Naive thymus-derived CD4-positive, alpha-beta T cell (primary cell): ENCODE measurements at regions of chr2 and their contacts with region 1.

Region 1: GRCh38 chr2:136135921-136136906 is 18.3 kb upstream of the CXCR4 start:
- DNase-seq: peak; percentile 32 to 98 (median 95)
- ATAC-seq: peak; percentile 76
- H3K4me3 ChIP-seq: peak overlapping the region; percentile 15
- H3K4me3 Mint-ChIP-seq: peak overlapping the region; percentile 52 to 92 (median 81)
- H3K27ac ChIP-seq: peak overlapping the region; percentile 99
- H3K27ac Mint-ChIP-seq: peak overlapping the region; percentile 82 to 100 (median 99)
- H3K4me1 ChIP-seq: peaks cover 86 to 87% of the 10 kb centered on the region in 2 donors
- H3K4me1 Mint-ChIP-seq: peaks cover 70 to 100% (median 94%) of the 10 kb centered on the region in 7 donors
- H3K27me3 ChIP-seq: no peaks in the 10 kb centered on the region
- H3K27me3 Mint-ChIP-seq: peaks cover 0 to 50% (median 0%) of the 10 kb centered on the region in 5 donors

Region 2: DNA sequence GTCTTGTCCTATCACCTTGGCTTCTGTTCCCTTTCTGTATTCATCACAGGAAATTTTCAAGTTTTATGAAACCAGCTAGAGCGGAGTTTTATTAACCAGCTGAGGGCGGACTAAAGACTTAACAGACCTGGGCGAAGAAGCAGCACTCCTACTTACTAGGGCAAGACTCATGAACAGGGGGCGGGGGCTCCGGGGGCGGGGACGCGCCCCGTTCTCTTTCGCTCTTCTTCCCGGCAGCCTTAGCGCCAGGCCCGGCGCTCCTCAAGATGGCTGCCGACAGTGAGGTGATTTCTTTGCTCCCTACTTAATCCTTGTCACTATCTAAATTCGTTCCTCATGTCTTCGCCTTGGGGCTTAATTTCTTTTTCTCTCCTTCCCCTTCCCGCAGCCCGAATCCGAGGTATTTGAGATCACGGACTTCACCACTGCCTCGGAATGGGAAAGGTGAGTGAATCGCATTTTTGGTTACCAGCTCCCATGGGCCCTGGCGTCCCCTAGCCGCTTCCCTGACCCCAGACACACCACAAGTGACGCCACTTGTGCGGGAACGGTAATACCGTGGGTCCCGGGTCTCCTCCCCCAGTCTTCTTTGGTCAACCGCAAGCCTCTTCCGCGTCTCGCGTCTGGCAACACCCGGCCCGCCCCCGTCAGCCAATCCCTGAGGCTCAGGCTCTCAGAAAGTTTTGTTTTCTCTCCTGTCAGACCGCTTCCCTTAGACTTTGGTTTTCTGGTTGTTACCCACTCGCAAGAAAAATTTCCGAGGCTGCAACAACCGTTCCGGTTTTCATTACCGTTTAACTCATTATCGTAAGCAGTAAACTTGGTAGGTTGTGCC is 1084.0 kb before region 1 on chr2 and contains the start of gene RAB3GAP1:
- CTCF ChIA-PET with region 1: interaction called, 3 read pairs
- POLR2A ChIA-PET with region 1: no interaction called
- intact Hi-C with region 1: loop called in 1 of 2 experiments (anchors 1 kb)
- DNase-seq: peak; percentile 76 to 96 (median 94)
- ATAC-seq: peak; percentile 93
- H3K4me3 ChIP-seq: peak within 1 kb of the TSS; percentile 69
- H3K4me3 Mint-ChIP-seq: peak within 1 kb of the TSS; percentile 94 to 99 (median 97)
- H3K27ac ChIP-seq: peak within 1 kb of the TSS; percentile 99
- H3K27ac Mint-ChIP-seq: peak within 1 kb of the TSS; percentile 98 to 100 (median 99)
- H3K4me1 ChIP-seq: peaks cover 0 to 22% of the 10 kb centered on the region in 2 donors
- H3K4me1 Mint-ChIP-seq: peaks cover 24 to 52% (median 48%) of the 10 kb centered on the region in 7 donors
- H3K27me3 ChIP-seq: no peaks in the 10 kb centered on the region
- H3K27me3 Mint-ChIP-seq: peaks cover 0 to 6% (median 0%) of the 10 kb centered on the region in 5 donors
- total RNA-seq, gene RAB3GAP1: 24.3 to 58.7 (median 42.9) TPM

Region 3: GRCh38 chr2:135825550-135826176 is 310.6 kb before region 1 on chr2:
- CTCF ChIA-PET with region 1: no interaction called
- POLR2A ChIA-PET with region 1: no interaction called
- intact Hi-C with region 1: no loop called
- DNase-seq: no peak
- ATAC-seq: no peak
- H3K4me3 ChIP-seq: no peak overlapping the region
- H3K4me3 Mint-ChIP-seq: no peak overlapping the region
- H3K27ac ChIP-seq: no peak overlapping the region
- H3K27ac Mint-ChIP-seq: peak overlapping the region in 1 of 9 donors; percentile 1
- H3K4me1 ChIP-seq: no peaks in the 10 kb centered on the region
- H3K4me1 Mint-ChIP-seq: peaks cover 0 to 28% (median 9%) of the 10 kb centered on the region in 7 donors
- H3K27me3 ChIP-seq: no peaks in the 10 kb centered on the region
- H3K27me3 Mint-ChIP-seq: no peaks in the 10 kb centered on the region

Region 4: DNA sequence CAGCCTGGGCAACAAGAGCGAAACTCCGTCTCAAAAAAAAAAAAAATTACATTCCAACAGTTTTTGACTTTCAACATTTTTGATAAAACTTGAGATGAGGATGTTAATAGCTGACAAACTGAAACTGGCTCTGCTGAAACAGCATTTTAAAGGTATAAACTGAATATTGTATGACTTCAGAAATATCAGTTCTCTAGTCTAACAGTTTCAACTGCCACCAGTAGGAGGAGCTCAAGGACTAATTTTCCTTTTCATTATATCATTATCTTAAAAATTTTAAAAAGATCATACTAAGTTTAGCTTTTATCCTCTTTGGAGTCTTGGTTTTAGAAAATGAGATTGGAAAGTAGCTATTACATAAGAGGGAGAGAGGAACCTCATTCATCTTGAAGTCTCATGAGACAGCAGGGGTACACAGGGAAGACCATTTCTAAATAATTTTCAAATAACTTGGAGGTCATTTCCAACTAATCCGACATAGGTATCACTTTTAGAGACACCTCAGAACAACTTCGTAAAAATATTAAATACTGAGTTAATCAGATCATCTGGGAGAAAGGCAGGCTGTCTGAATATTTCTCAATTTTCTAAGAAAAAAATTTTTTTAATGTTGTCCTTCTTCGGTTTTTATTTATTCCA is 222.4 kb before region 1 on chr2:
- CTCF ChIA-PET with region 1: interaction called, 3 read pairs
- POLR2A ChIA-PET with region 1: interaction called, 5 read pairs
- intact Hi-C with region 1: loop called in 1 of 2 experiments (anchors 5 kb)
- DNase-seq: peak in 7 of 9 donors; percentile 36 to 67 (median 60)
- ATAC-seq: peak; percentile 63
- H3K4me3 ChIP-seq: no peak overlapping the region
- H3K4me3 Mint-ChIP-seq: no peak overlapping the region
- H3K27ac ChIP-seq: no peak overlapping the region
- H3K27ac Mint-ChIP-seq: peak overlapping the region in 6 of 9 donors; percentile 34 to 82 (median 55)
- H3K4me1 ChIP-seq: no peaks in the 10 kb centered on the region
- H3K4me1 Mint-ChIP-seq: peaks cover 0 to 12% (median 3%) of the 10 kb centered on the region in 7 donors
- H3K27me3 ChIP-seq: no peaks in the 10 kb centered on the region
- H3K27me3 Mint-ChIP-seq: no peaks in the 10 kb centered on the region

Region 5: GRCh38 chr2:136112317-136113208 is 23.7 kb before region 1 on chr2:
- CTCF ChIA-PET with region 1: interaction called, 6 read pairs
- POLR2A ChIA-PET with region 1: interaction called, 86 read pairs
- intact Hi-C with region 1: no loop called
- DNase-seq: peak in 2 of 9 donors; percentile 19 to 39
- ATAC-seq: no peak
- H3K4me3 ChIP-seq: no peak overlapping the region
- H3K4me3 Mint-ChIP-seq: peak overlapping the region in 8 of 10 donors; percentile 10 to 100 (median 68)
- H3K27ac ChIP-seq: no peak overlapping the region
- H3K27ac Mint-ChIP-seq: peak overlapping the region in 8 of 9 donors; percentile 39 to 100 (median 69)
- H3K4me1 ChIP-seq: peaks cover 20 to 30% of the 10 kb centered on the region in 2 donors
- H3K4me1 Mint-ChIP-seq: peaks cover 21 to 53% (median 42%) of the 10 kb centered on the region in 7 donors
- H3K27me3 ChIP-seq: no peaks in the 10 kb centered on the region
- H3K27me3 Mint-ChIP-seq: peaks cover 0 to 4% (median 0%) of the 10 kb centered on the region in 5 donors

Region 6: GRCh38 chr2:136191041-136191440 is 54.8 kb after region 1 on chr2:
- CTCF ChIA-PET with region 1: interaction called, 3 read pairs
- POLR2A ChIA-PET with region 1: interaction called, 4 read pairs
- intact Hi-C with region 1: loop called in 1 of 2 experiments (anchors 2 kb)
- DNase-seq: no peak
- ATAC-seq: no peak
- H3K4me3 ChIP-seq: no peak overlapping the region
- H3K4me3 Mint-ChIP-seq: no peak overlapping the region
- H3K27ac ChIP-seq: no peak overlapping the region
- H3K27ac Mint-ChIP-seq: peak overlapping the region in 1 of 9 donors; percentile 30
- H3K4me1 ChIP-seq: no peaks in the 10 kb centered on the region
- H3K4me1 Mint-ChIP-seq: peaks cover 0 to 8% (median 0%) of the 10 kb centered on the region in 7 donors
- H3K27me3 ChIP-seq: no peaks in the 10 kb centered on the region
- H3K27me3 Mint-ChIP-seq: no peaks in the 10 kb centered on the region

Region 7: DNA sequence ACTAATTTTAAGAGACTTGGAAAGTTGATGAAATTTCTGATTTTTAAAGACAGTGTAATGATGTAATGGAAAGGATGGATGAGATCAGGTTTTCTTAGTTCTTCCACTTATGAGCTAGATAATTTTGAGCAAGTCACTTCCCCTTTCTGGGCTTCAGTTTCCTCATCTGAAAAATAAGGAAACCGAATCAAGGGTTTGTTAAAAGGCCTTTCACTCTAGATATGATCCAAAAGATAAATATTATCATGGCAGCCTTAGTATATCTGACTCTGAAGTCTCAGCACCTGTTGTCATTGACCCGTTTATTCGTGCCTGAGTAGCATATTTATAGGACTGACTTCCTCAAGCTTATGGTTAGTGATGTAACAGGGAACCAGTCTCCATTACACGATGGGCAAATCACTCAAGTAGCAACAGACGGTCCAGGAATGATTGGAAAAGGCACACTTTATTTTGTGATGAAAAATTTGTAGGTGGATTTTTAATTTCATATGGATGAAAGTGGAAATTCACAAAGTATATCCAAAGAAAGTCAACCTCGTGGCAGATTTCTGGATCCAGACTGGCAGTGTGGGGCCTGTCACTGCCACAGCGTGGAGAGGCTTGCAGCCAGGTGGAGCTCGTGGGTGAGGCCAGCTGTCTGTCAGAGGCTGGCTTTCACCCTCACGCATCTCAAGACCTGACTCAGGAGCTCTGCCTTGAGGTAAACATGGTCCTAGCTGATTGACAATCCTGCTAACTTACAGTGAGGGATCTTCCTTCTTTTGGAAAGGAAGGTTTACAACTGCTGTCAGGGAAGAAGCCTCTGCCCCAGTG is 119.6 kb after region 1 on chr2:
- CTCF ChIA-PET with region 1: interaction called, 4 read pairs
- POLR2A ChIA-PET with region 1: interaction called, 3 read pairs
- intact Hi-C with region 1: loop called in 1 of 2 experiments (anchors 1 kb)
- DNase-seq: peak in 7 of 9 donors; percentile 16 to 58 (median 35)
- ATAC-seq: peak; percentile 68
- H3K4me3 ChIP-seq: no peak overlapping the region
- H3K4me3 Mint-ChIP-seq: no peak overlapping the region
- H3K27ac ChIP-seq: no peak overlapping the region
- H3K27ac Mint-ChIP-seq: peak overlapping the region in 8 of 9 donors; percentile 2 to 87 (median 40)
- H3K4me1 ChIP-seq: no peaks in the 10 kb centered on the region
- H3K4me1 Mint-ChIP-seq: peaks cover 7 to 42% (median 27%) of the 10 kb centered on the region in 7 donors
- H3K27me3 ChIP-seq: no peaks in the 10 kb centered on the region
- H3K27me3 Mint-ChIP-seq: no peaks in the 10 kb centered on the region

Region 8: GRCh38 chr2:136378712-136379595 is 242.7 kb after region 1 on chr2:
- CTCF ChIA-PET with region 1: interaction called, 14 read pairs
- POLR2A ChIA-PET with region 1: interaction called, 86 read pairs
- intact Hi-C with region 1: loop called (anchors 1 kb)
- DNase-seq: peak; percentile 44 to 81 (median 75)
- ATAC-seq: peak; percentile 69
- H3K4me3 ChIP-seq: no peak overlapping the region
- H3K4me3 Mint-ChIP-seq: peak overlapping the region in 1 of 10 donors; percentile 12
- H3K27ac ChIP-seq: no peak overlapping the region
- H3K27ac Mint-ChIP-seq: peak overlapping the region in 6 of 9 donors; percentile 48 to 93 (median 82)
- H3K4me1 ChIP-seq: peaks cover 20 to 34% of the 10 kb centered on the region in 2 donors
- H3K4me1 Mint-ChIP-seq: peaks cover 32 to 84% (median 65%) of the 10 kb centered on the region in 7 donors
- H3K27me3 ChIP-seq: no peaks in the 10 kb centered on the region
- H3K27me3 Mint-ChIP-seq: no peaks in the 10 kb centered on the region